ENCODE measurements at regions of chr14 and their contacts with region 1.

Region 1: DNA sequence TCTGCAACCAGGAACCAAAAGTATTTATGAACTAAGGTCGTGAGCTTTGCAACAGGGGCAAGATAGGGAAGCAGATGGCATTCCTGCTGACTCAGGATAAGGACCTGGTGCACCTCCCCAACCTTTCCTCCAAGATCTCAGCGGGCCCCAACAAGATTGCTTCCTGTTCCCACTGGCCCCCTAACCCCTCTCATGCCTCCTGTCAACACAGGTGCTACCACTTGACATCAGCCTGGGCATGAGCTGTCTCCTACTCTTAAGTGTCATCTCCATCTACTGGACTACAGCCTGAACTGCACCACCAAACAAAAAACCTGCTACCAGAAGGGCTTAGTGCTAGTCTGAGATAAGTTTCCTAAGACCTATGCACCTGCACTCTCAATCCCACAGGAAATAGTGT is 32.7 kb downstream of the MED6 start:
- DNase-seq: peak; percentile 49
- H3K4me3 Mint-ChIP-seq: no peak overlapping the region
- H3K27ac Mint-ChIP-seq: no peak overlapping the region
- H3K4me1 Mint-ChIP-seq: peaks cover 4% of the 10 kb centered on the region
- H3K27me3 Mint-ChIP-seq: no peaks in the 10 kb centered on the region
- CTCF ChIP-seq: peak; percentile 57

Region 2: GRCh38 chr14:70086685-70087379 is 481.0 kb before region 1 on chr14:
- CTCF ChIA-PET with region 1: interaction called, 4 read pairs
- POLR2A ChIA-PET with region 1: no interaction called
- intact Hi-C with region 1: loop called (anchors 2 kb)
- DNase-seq: peak; percentile 51
- H3K4me3 Mint-ChIP-seq: no peak overlapping the region
- H3K27ac Mint-ChIP-seq: no peak overlapping the region
- H3K4me1 Mint-ChIP-seq: no peaks in the 10 kb centered on the region
- H3K27me3 Mint-ChIP-seq: peaks cover 39% of the 10 kb centered on the region
- CTCF ChIP-seq: peak; percentile 63

Region 3: GRCh38 chr14:70698288-70698687 is 130.5 kb after region 1 on chr14:
- CTCF ChIA-PET with region 1: no interaction called
- POLR2A ChIA-PET with region 1: no interaction called
- intact Hi-C with region 1: no loop called
- DNase-seq: peak; percentile 53
- H3K4me3 Mint-ChIP-seq: no peak overlapping the region
- H3K27ac Mint-ChIP-seq: peak overlapping the region; percentile 65
- H3K4me1 Mint-ChIP-seq: peaks cover 18% of the 10 kb centered on the region
- H3K27me3 Mint-ChIP-seq: no peaks in the 10 kb centered on the region
- CTCF ChIP-seq: no peak

Region 4: GRCh38 chr14:72284176-72284575 is 1716.4 kb after region 1 on chr14:
- CTCF ChIA-PET with region 1: no interaction called
- POLR2A ChIA-PET with region 1: no interaction called
- intact Hi-C with region 1: no loop called
- DNase-seq: no peak
- H3K4me3 Mint-ChIP-seq: no peak overlapping the region
- H3K27ac Mint-ChIP-seq: no peak overlapping the region
- H3K4me1 Mint-ChIP-seq: no peaks in the 10 kb centered on the region
- H3K27me3 Mint-ChIP-seq: peaks cover 18% of the 10 kb centered on the region
- CTCF ChIP-seq: no peak